ENCODE measurements at regions of chr10 and their contacts with region 1.

Region 1: GRCh38 chr10:63166742-63167258 is 33.7 kb downstream of the NRBF2 start:
- DNase-seq: no peak
- H3K4me3 ChIP-seq: no peak overlapping the region
- H3K27ac ChIP-seq: peak overlapping the region in 1 of 2 donors; percentile 8
- H3K4me1 ChIP-seq: peaks cover 0 to 15% (median 3%) of the 10 kb centered on the region in 4 donors
- H3K27me3 ChIP-seq: no peaks in the 10 kb centered on the region
- CTCF ChIP-seq: peak; percentile 69 to 87

Region 2: DNA sequence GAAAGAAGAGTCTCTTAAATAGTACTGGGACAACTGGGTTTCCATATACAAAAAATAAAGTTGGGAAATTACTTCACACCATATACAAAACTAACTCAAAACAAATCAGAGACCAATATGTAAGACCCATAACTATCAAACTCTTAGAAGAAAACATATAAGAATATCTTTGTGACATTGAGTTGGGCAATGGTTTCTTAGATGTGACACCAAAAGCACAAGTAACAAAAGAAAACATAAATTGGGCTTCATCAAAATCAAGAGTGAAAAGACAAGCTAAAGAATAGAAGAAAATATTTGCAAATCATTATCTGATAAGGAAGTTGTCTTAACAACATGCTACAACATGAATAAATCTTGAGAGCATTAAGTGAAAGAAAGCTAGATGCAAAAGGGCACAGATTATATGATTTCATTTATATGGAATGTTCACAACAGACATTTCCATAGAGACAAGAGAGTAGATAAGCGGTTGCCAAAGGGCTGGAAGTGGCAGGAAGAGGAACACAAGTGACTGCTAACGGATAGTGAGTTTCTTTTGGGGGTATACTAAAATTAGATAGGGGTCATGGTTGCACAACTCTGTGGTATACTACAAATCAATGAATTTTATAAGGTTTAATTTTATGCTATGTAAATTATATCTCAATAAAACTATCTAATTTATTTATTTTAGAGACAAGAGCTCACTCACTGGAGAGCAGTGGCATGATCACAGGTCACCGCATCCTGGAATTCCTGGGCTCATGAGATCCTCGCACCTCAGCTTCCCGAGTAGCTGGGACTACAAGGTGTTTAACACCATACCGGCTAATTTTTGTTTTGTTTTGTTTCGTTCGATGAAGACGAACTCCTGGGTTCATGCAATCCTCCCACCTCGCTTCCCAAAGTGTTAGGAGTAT is 263.5 kb after region 1 on chr10:
- intact Hi-C with region 1: no loop called
- DNase-seq: no peak
- H3K4me3 ChIP-seq: no peak overlapping the region
- H3K27ac ChIP-seq: peak overlapping the region in 1 of 2 donors; percentile 32
- H3K4me1 ChIP-seq: peaks cover 0 to 66% (median 25%) of the 10 kb centered on the region in 4 donors
- H3K27me3 ChIP-seq: no peaks in the 10 kb centered on the region
- CTCF ChIP-seq: no peak

Region 3: DNA sequence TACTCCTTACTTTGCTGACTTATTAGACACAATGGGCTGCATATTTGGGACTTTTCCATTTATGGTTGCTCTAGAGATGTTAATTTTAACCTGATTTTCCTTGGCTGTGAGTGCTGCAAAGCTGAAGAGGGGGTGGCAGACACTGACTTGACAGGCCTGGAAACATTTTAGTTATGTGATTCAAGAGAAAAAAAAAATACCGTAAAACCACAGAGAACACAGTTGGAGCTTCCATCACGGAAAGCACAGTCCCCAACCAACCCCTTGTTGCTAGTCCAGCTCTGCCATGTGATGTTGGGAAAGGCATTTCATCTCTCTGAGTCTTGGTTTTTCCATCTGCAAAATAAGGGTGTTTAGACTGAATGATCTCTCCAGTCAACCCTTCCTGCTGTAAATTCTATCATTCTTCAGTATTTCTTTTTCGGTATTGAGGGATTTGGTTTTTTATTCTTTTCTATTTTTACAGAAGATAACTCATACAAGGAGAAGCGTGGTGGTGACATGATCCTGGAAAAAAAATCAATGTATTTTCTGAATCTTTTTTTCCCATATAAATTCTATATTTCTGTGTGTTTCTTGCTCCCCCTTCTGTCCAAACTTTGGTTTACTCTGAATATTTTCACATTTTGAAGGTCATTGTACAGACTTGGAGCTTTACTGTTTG is 600.5 kb after region 1 on chr10:
- intact Hi-C with region 1: loop called (anchors 5 kb)
- DNase-seq: no peak
- H3K4me3 ChIP-seq: no peak overlapping the region
- H3K27ac ChIP-seq: peak overlapping the region; percentile 46 to 54
- H3K4me1 ChIP-seq: peaks cover 0 to 16% (median 5%) of the 10 kb centered on the region in 4 donors
- H3K27me3 ChIP-seq: no peaks in the 10 kb centered on the region
- CTCF ChIP-seq: peak; percentile 42 to 56

Region 4: GRCh38 chr10:63819753-63820329 is 653.0 kb after region 1 on chr10:
- intact Hi-C with region 1: loop called (anchors 10 kb)
- DNase-seq: peak; percentile 81 to 83
- H3K4me3 ChIP-seq: no peak overlapping the region
- H3K27ac ChIP-seq: no peak overlapping the region
- H3K4me1 ChIP-seq: peaks cover 0 to 10% (median 0%) of the 10 kb centered on the region in 4 donors
- H3K27me3 ChIP-seq: no peaks in the 10 kb centered on the region
- CTCF ChIP-seq: peak; percentile 70 to 76

Measured in tibial artery (tissue), 4 donors.